Caco-2 (cell line): ENCODE measurements at regions of chr1 and their contacts with region 1.

Region 1: DNA sequence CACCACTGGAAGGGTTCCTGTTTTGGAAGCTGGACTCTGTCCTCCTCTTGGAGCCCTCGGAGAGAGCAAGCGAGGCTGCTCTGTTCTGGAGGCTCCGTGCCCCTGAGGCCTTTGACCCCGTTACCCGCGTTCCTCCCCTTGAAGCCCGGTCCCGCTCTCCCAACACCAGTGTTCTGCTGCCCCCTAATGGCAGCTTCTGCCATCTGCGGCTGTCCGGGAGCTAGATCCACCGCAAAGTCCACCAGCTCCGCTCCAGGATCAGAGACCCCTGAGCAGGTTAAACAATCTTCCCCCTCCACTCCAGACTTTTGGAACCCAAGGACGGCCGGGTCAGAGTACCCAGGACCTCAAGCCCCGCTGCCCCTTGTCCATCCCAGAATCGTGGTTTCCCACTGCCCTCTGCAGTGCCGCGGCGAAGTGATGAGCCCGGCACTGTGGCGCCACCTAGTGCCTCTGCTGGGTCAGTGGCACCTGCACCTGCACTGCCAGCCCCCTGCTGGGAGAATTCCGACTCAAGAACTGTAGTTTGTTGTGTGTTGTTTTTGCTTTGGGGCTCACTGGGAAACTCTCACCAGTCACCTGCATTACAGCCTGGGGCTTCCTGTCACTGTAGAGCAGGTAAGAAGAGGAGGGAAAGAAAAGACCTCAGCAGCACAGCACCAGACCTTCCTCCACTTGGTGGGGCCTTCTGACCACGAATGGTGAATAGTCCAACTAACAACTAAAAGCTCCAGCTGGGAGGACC is 63.5 kb upstream of the NFASC start:
- DNase-seq: peak; percentile 86 to 90
- H3K4me3 ChIP-seq: peak overlapping the region; percentile 34
- H3K4me3 Mint-ChIP-seq: peak overlapping the region; percentile 70
- H3K27ac Mint-ChIP-seq: no peak overlapping the region
- H3K4me1 ChIP-seq: no peaks in the 10 kb centered on the region
- H3K4me1 Mint-ChIP-seq: no peaks in the 10 kb centered on the region
- H3K27me3 ChIP-seq: no peaks in the 10 kb centered on the region
- H3K27me3 Mint-ChIP-seq: peaks cover 6% of the 10 kb centered on the region
- CTCF ChIP-seq: peak; percentile 99

Region 2: GRCh38 chr1:204516180-204516879 is 290.8 kb before region 1 on chr1 and contains the start of gene MDM4:
- CTCF ChIA-PET with region 1: interaction called, 20 read pairs
- POLR2A ChIA-PET with region 1: no interaction called
- intact Hi-C with region 1: no loop called
- DNase-seq: peak; percentile 95 to 96
- H3K4me3 ChIP-seq: peak within 1 kb of the TSS; percentile 49
- H3K4me3 Mint-ChIP-seq: no peak within 1 kb of the TSS
- H3K27ac Mint-ChIP-seq: no peak within 1 kb of the TSS
- H3K4me1 ChIP-seq: no peaks in the 10 kb centered on the region
- H3K4me1 Mint-ChIP-seq: peaks cover 7% of the 10 kb centered on the region
- H3K27me3 ChIP-seq: no peaks in the 10 kb centered on the region
- H3K27me3 Mint-ChIP-seq: no peaks in the 10 kb centered on the region
- CTCF ChIP-seq: no peak
- total RNA-seq, gene MDM4: 56.5 and 58.9 TPM in 2 replicates

Region 3: DNA sequence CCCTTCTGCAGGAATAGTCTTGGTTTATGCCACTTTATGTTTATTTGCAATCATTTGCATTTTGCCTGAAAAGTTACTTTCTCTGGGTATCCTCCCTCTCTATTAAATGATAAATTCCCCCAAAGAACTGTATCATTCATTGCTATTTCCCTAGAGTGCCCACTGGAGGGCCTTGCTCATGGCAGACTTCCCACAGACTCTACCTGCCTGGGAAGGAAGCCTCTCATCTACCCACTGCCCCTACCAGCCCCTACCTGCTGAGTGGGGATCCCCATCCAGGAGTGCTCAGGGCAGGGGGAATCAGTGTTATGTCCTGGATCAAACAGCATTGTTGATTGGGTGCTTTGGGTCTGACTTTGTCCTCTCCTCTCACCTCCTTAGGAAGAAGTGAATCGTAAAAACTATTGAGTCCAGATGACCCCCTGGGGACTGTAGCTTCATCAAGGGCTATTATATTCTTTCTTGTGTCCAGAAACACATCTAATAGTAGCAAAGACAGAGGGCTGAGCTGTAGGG is 114.7 kb before region 1 on chr1:
- CTCF ChIA-PET with region 1: no interaction called
- POLR2A ChIA-PET with region 1: no interaction called
- intact Hi-C with region 1: loop called (anchors 5 kb)
- DNase-seq: no peak
- H3K4me3 ChIP-seq: no peak overlapping the region
- H3K4me3 Mint-ChIP-seq: no peak overlapping the region
- H3K27ac Mint-ChIP-seq: no peak overlapping the region
- H3K4me1 ChIP-seq: no peaks in the 10 kb centered on the region
- H3K4me1 Mint-ChIP-seq: no peaks in the 10 kb centered on the region
- H3K27me3 ChIP-seq: no peaks in the 10 kb centered on the region
- H3K27me3 Mint-ChIP-seq: peaks cover 25% of the 10 kb centered on the region
- CTCF ChIP-seq: no peak

Region 4: DNA sequence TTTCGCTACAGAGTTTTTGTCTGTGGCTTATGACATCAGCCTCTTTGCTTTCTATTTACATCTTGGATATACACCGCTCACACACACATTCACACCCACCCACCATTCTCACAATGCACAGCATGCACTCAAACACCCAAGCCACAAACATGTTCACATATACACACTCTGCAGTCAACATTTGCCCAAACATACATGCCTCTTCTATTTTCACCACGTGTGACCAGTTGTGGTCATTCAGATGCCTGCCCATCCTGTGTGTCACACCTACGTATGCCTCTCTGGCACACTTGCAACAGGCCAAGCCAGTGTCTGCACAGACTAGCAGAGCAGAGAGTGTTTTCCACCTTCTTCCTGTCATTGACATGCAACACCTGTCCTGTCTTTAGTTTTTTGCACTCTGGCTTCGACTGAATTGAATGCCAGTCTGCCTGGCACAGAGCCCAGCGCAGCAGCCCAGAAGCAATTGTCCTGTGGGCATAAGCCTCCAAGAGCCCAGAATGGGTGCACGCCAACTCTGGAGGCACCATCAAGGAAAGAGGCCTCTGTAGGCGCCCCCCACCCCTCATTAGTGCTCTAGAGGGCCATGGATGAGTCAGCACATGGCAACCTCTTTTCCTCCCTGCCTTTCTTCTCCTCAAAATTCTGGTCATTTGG is 83.9 kb before region 1 on chr1:
- CTCF ChIA-PET with region 1: no interaction called
- POLR2A ChIA-PET with region 1: no interaction called
- intact Hi-C with region 1: no loop called
- DNase-seq: peak in 1 of 2 experiments; percentile 3
- H3K4me3 ChIP-seq: no peak overlapping the region
- H3K4me3 Mint-ChIP-seq: no peak overlapping the region
- H3K27ac Mint-ChIP-seq: no peak overlapping the region
- H3K4me1 ChIP-seq: peaks cover 12% of the 10 kb centered on the region
- H3K4me1 Mint-ChIP-seq: peaks cover 7% of the 10 kb centered on the region
- H3K27me3 ChIP-seq: no peaks in the 10 kb centered on the region
- H3K27me3 Mint-ChIP-seq: no peaks in the 10 kb centered on the region
- CTCF ChIP-seq: no peak

Region 5: DNA sequence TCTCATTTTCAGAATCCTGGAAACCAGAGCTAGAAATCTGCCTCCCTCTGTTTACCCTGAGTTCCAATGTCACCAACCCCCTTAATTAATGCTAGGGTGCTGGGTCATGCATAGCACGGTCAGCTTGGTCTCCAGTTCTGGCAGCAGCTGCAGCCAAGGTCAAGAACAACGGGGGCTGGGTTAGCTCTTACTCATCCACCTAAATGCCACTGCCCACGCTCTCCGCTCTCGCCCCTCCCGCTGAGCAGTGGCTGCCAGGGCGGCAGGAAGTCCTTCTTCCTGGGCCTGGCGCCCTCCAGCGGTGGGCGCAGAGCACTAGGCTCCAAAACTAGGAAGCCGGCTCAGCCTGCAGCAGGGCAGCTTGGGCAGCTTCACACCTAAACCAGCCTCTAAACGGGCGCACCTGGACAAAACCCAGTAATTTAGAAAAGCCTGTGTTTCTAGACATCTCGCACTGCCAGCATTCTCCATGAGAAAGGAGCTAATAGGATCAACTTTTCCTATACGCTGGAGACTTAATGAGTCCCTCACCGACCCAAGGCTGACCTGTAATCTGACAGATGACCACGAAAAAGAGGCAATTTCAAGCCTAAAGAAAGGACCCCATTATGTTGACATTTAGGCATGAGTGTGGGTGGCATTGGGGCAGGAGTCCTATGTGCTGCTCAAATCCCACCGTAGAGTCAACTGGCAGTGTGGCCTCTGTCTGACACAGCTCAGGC is 43.2 kb before region 1 on chr1:
- CTCF ChIA-PET with region 1: interaction called, 11 read pairs
- POLR2A ChIA-PET with region 1: interaction called, 4 read pairs
- intact Hi-C with region 1: no loop called
- DNase-seq: peak; percentile 56 to 66
- H3K4me3 ChIP-seq: no peak overlapping the region
- H3K4me3 Mint-ChIP-seq: no peak overlapping the region
- H3K27ac Mint-ChIP-seq: no peak overlapping the region
- H3K4me1 ChIP-seq: no peaks in the 10 kb centered on the region
- H3K4me1 Mint-ChIP-seq: no peaks in the 10 kb centered on the region
- H3K27me3 ChIP-seq: no peaks in the 10 kb centered on the region
- H3K27me3 Mint-ChIP-seq: peaks cover 24% of the 10 kb centered on the region
- CTCF ChIP-seq: peak; percentile 77 to 88

Region 6: DNA sequence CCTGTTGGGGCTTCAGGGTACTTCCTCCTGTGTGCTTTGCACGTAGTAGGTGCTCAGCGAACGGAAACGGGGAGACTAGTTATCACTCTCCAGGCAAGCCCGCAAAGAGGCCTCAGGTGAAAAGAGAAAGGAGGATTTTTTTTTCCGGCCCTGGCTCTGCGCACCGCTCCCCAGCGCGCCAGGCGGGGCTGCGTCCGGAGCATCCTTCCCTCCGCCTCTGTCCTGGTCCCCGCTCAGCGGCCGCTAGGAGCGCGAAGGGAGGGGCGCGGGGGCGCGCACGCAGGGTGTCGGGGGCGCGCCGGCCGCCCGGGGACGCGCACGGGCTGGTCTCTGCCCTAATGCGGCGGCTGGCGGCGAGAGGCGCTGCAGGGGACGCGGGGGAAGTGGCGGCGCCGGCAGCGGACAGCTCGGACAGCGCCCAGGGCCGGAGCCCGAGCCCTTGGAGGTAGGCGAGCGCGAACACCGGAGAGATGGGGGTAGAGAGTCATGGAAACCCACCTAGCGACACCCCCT is 21.3 kb after region 1 on chr1:
- CTCF ChIA-PET with region 1: interaction called, 11 read pairs
- POLR2A ChIA-PET with region 1: no interaction called
- intact Hi-C with region 1: no loop called
- DNase-seq: peak; percentile 52 to 77
- H3K4me3 ChIP-seq: peak overlapping the region; percentile 25
- H3K4me3 Mint-ChIP-seq: no peak overlapping the region
- H3K27ac Mint-ChIP-seq: no peak overlapping the region
- H3K4me1 ChIP-seq: no peaks in the 10 kb centered on the region
- H3K4me1 Mint-ChIP-seq: no peaks in the 10 kb centered on the region
- H3K27me3 ChIP-seq: peaks cover 1% of the 10 kb centered on the region; the same call in 1 of the 2 replicates
- H3K27me3 Mint-ChIP-seq: peaks cover 18% of the 10 kb centered on the region
- CTCF ChIP-seq: no peak

Region 7: GRCh38 chr1:204961765-204962419 is 154.8 kb after region 1 on chr1:
- CTCF ChIA-PET with region 1: interaction called, 4 read pairs
- POLR2A ChIA-PET with region 1: no interaction called
- intact Hi-C with region 1: loop called (anchors 5 kb)
- DNase-seq: no peak
- H3K4me3 ChIP-seq: no peak overlapping the region
- H3K4me3 Mint-ChIP-seq: no peak overlapping the region
- H3K27ac Mint-ChIP-seq: no peak overlapping the region
- H3K4me1 ChIP-seq: no peaks in the 10 kb centered on the region
- H3K4me1 Mint-ChIP-seq: no peaks in the 10 kb centered on the region
- H3K27me3 ChIP-seq: peaks cover 1% of the 10 kb centered on the region
- H3K27me3 Mint-ChIP-seq: peaks cover 21% of the 10 kb centered on the region
- CTCF ChIP-seq: no peak